Astrocyte of the cerebellum (primary cell): ENCODE measurements at regions of chr12 and their contacts with region 1.

Region 1: GRCh38 chr12:9940375-9940774 is 8.2 kb upstream of the CLEC2A start:
- DNase-seq: no peak
- H3K4me3 ChIP-seq: no peak overlapping the region
- CTCF ChIP-seq: peak; percentile 33

Region 2: DNA sequence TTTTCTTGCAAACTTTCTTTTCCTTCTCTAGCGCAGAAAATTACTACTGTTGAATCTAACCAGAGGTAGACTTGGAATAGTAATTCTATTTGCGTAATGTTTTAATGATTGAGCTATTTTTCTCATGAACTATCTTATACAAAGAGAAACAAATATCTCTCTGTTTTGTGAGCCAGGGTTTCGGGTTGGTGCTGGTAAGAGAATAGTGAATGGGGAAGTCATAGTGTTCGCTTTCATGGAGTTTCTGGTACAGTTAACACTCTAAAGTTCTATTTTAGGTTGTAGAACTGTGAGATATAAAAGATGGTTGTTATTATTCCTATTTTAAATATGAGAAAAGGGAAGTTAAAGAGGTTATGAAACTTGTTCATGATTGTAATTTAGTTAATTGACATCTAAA is 51.9 kb after region 1 on chr12:
- in situ Hi-C with region 1: loop called (anchors 5 kb)
- DNase-seq: no peak
- H3K4me3 ChIP-seq: no peak overlapping the region
- CTCF ChIP-seq: no peak